Lower leg skin (tissue), 4 donors: ENCODE measurements at regions of chr15 and their contacts with region 1.

Region 1: DNA sequence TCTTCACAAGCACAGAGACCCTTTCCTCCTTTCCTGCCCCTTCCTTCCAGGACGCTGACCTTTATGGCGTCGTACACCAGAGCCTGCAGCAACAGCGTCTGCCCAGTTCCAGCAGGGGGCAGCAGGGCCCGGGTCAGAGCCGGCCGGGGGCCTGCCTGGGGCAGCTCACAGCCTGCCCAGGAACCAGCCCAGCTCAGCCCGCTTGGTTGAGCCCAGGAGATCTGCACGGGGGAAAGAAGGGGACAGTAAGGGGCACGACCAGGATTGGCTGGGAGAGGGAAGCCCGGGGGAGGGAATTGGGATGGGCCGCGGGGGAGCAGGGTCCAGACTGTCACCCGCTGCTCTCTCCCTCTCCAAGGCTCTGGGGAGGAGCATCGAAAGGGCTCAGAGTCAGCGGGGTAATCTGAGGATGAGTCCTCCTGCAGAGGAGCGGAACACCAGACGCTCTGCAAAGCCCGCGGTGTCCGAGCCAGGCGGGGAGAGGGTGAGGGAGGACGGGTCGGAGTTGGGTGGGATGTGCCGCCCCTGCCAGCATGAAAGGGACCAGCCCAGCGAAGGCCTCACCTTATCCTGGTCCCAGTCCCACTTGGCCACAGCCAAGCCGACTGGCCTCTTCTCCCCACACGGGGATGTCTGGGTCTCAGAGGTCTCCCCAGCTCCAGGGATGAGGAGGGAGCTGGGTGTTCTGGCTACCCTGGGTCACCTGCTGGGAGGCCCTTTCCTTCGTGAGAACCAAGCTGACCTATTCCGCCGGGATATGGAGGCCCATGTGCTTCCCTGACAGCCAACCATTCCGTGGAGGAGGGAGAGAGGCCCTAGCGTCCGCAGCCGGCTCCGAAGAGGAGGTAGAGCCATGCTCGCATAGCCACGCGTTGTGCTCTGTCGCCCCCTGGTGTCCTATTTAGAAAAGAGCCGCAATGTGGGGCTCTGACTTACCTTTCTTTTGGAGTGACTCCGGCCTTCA is 7.4 kb upstream of the IGDCC3 start:
- DNase-seq: peak; percentile 78 to 95
- H3K4me3 ChIP-seq: no peak overlapping the region
- CTCF ChIP-seq: peak in 1 of 3 donors; percentile 59
- POLR2A ChIP-seq: no peak

Region 2: GRCh38 chr15:65189102-65189740 is 196.0 kb before region 1 on chr15:
- intact Hi-C with region 1: no loop called
- DNase-seq: peak in 1 of 2 donors; percentile 70
- H3K4me3 ChIP-seq: no peak overlapping the region
- CTCF ChIP-seq: peak in 1 of 3 donors; percentile 58
- POLR2A ChIP-seq: no peak

Region 3: DNA sequence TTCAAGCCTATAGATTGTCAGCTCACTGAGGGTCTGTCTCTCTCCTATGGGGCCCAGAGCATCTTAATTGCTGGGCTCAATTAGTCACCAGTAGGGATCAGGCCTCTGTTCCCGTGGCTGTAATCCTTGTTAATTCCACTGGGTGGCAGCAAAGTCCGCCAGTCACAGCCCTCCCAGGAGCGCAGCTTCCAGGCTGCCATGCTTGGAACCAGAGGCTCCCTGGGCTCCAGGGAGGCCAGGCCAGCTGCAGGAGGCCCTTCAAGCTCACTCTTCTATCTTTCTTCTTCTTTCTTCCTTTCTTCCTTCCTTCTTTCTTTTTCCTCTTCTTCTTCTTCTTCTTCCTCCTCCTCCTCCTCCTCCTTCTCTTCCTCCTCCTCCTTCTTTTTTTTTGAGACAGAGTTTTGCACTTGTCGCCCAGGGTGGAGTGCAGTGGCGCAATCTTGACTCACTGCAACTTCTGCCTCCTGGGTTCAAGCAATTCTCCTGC is 66.3 kb before region 1 on chr15:
- intact Hi-C with region 1: loop called (anchors 5 kb)
- DNase-seq: peak; percentile 75 to 94
- H3K4me3 ChIP-seq: no peak overlapping the region
- CTCF ChIP-seq: peak in 1 of 3 donors; percentile 92
- POLR2A ChIP-seq: no peak